ENCODE measurements at regions of chr22 and their contacts with region 1.

Region 1: DNA sequence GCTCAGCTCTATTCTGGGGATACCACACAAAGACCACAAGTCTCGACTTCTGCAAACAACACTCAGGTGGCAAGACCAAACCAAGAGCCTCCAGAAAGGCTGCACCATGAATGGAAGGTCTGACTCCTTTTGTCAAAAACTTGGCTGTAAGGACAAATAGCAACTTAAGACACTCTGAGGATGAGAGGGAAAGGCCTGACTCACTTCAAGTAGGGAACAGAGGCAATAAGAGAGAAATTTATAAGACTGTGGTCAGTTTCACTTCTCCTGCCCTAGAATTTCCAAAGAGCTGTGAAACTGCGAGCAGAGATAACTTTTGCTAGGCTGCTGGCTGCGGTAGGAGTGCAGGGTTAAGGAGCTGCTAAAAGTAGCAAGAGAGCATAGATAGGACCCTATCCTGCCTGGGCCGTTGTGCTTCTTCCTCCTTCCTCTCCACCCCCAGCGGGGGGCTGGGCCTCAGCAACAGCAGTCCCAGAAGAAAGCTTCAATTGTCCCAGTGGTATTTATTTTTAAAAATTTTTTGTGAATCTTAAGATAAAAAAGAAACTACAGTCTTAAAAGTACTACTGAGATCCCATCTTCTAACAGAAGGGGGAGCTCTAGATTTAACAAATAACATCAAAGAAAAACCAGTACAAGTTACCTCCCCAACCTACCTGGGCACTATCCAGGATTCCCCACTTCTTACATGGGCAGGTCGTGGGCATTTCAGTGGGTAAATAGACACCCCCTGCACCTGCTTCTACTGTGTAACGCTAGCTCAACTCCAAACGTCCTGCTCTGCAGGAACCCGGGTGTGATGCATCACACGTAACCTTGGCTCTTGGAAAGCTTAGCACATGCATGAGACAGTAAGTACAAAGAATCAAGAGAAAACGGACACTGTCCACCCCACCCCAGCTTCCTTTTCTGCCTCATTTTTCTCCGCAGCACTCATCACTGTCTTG is 66.4 kb downstream of the SGSM3 start:
- DNase-seq: peak; percentile 53
- ATAC-seq: peak; percentile 81
- H3K4me3 ChIP-seq: no peak overlapping the region
- H3K27ac ChIP-seq: no peak overlapping the region
- H3K4me1 ChIP-seq: peaks cover 0 to 2% of the 10 kb centered on the region in 2 experiments; a peak in 1 of 4 replicates
- H3K27me3 ChIP-seq: no peaks in the 10 kb centered on the region
- CTCF ChIP-seq: peak; percentile 48 to 76 (median 76)
- POLR2A ChIP-seq: no peak
- RAD21 ChIP-seq: peak; percentile 77

Region 2: DNA sequence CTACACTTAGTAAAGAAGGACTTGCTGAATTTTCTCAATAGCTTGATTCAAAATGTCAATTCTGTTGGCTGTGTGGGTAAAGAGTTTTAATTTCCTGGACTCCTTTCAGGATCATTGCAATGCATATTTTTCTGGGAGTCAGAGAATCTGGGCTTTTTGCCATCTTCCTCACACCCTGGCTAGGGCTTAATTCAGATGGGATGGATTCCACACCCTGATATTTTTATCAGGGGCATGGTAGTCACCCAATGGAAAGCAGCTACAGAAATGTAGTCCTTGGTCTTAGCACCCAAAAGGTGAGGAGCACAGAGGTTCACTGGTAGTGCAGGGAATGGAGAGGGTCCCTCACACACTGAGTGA is 12.9 kb after region 1 on chr22:
- CTCF ChIA-PET with region 1: interaction called, 15 read pairs
- POLR2A ChIA-PET with region 1: no interaction called
- RAD21 ChIA-PET with region 1: no interaction called
- intact Hi-C with region 1: no loop called
- DNase-seq: no peak
- ATAC-seq: no peak
- H3K4me3 ChIP-seq: no peak overlapping the region
- H3K27ac ChIP-seq: no peak overlapping the region
- H3K4me1 ChIP-seq: 0 out of 4 replicates have a peak, but pooled peaks cover 2 to 3% of the 10 kb centered on the region in 2 experiments
- H3K27me3 ChIP-seq: no peaks in the 10 kb centered on the region
- CTCF ChIP-seq: no peak
- POLR2A ChIP-seq: no peak
- RAD21 ChIP-seq: no peak

Region 3: GRCh38 chr22:40487663-40488249 is 51.0 kb after region 1 on chr22:
- CTCF ChIA-PET with region 1: interaction called, 6 read pairs
- POLR2A ChIA-PET with region 1: no interaction called
- RAD21 ChIA-PET with region 1: no interaction called
- intact Hi-C with region 1: loop called (anchors 2 kb)
- DNase-seq: no peak
- ATAC-seq: peak; percentile 77
- H3K4me3 ChIP-seq: no peak overlapping the region
- H3K27ac ChIP-seq: no peak overlapping the region
- H3K4me1 ChIP-seq: no peaks in the 10 kb centered on the region
- H3K27me3 ChIP-seq: no peaks in the 10 kb centered on the region
- CTCF ChIP-seq: peak; percentile 35 to 84 (median 73); a peak in 5 of 6 replicates
- POLR2A ChIP-seq: no peak
- RAD21 ChIP-seq: peak; percentile 47

Region 4: GRCh38 chr22:40645579-40646197 is 208.9 kb after region 1 on chr22:
- CTCF ChIA-PET with region 1: interaction called, 37 read pairs
- POLR2A ChIA-PET with region 1: interaction called, 6 read pairs
- RAD21 ChIA-PET with region 1: interaction called in 1 of 2 experiments, 4 read pairs
- intact Hi-C with region 1: loop called (anchors 1 kb)
- DNase-seq: no peak
- ATAC-seq: no peak
- H3K4me3 ChIP-seq: no peak overlapping the region; a peak in 1 of 4 replicates
- H3K27ac ChIP-seq: no peak overlapping the region
- H3K4me1 ChIP-seq: peaks cover 8 to 23% of the 10 kb centered on the region in 2 experiments; a peak in 3 of 4 replicates
- H3K27me3 ChIP-seq: no peaks in the 10 kb centered on the region
- CTCF ChIP-seq: no peak
- POLR2A ChIP-seq: no peak
- RAD21 ChIP-seq: no peak

Region 5: DNA sequence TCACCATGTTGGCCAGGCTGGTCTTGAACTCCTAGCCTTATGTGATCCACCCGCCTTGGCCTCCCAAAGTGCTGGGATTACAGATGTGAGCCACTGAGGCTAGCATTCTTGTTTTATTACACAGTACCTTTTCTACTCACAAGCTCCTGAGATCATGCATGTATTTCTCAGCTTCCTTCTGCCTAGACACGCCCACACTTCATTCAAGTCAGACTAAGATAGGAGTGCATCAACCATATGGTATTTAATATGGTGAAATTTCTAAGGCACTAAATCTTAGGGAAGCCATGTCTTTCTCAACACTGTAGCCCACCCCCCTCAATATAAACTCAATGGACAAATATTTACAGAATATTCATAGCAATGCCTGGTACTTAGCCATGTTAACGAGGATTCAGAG is 320.3 kb after region 1 on chr22:
- CTCF ChIA-PET with region 1: interaction called, 13 read pairs
- POLR2A ChIA-PET with region 1: no interaction called
- RAD21 ChIA-PET with region 1: no interaction called
- intact Hi-C with region 1: loop called (anchors 10 kb)
- DNase-seq: no peak
- ATAC-seq: no peak
- H3K4me3 ChIP-seq: no peak overlapping the region
- H3K27ac ChIP-seq: no peak overlapping the region
- H3K4me1 ChIP-seq: peaks cover 0 to 2% of the 10 kb centered on the region in 2 experiments; a peak in 2 of 4 replicates
- H3K27me3 ChIP-seq: no peaks in the 10 kb centered on the region
- CTCF ChIP-seq: no peak
- POLR2A ChIP-seq: no peak
- RAD21 ChIP-seq: no peak

Region 6: GRCh38 chr22:40764763-40765441 is 328.1 kb after region 1 on chr22:
- CTCF ChIA-PET with region 1: interaction called, 13 read pairs
- POLR2A ChIA-PET with region 1: no interaction called
- RAD21 ChIA-PET with region 1: no interaction called
- intact Hi-C with region 1: loop called (anchors 10 kb)
- DNase-seq: no peak
- ATAC-seq: no peak
- H3K4me3 ChIP-seq: no peak overlapping the region
- H3K27ac ChIP-seq: no peak overlapping the region
- H3K4me1 ChIP-seq: no peaks in the 10 kb centered on the region; a peak in 1 of 4 replicates
- H3K27me3 ChIP-seq: no peaks in the 10 kb centered on the region
- CTCF ChIP-seq: no peak
- POLR2A ChIP-seq: no peak
- RAD21 ChIP-seq: no peak

Region 7: GRCh38 chr22:40898850-40899357 is 462.1 kb after region 1 on chr22:
- CTCF ChIA-PET with region 1: interaction called, 17 read pairs
- POLR2A ChIA-PET with region 1: no interaction called
- RAD21 ChIA-PET with region 1: no interaction called
- intact Hi-C with region 1: loop called (anchors 2 kb)
- DNase-seq: peak; percentile 23
- ATAC-seq: peak; percentile 78
- H3K4me3 ChIP-seq: no peak overlapping the region
- H3K27ac ChIP-seq: no peak overlapping the region
- H3K4me1 ChIP-seq: no peaks in the 10 kb centered on the region
- H3K27me3 ChIP-seq: no peaks in the 10 kb centered on the region
- CTCF ChIP-seq: peak; percentile 48 to 59 (median 56); a peak in 5 of 6 replicates
- POLR2A ChIP-seq: no peak
- RAD21 ChIP-seq: peak; percentile 78

Measured in HCT116 (cell line).